Activated CD4-positive, alpha-beta T cell treated with anti-CD3 and anti-CD28 coated beads, Interleukin-2, amount 10 ng/mL, durations not matched to agents 24 days and 14 days (primary cell): ENCODE measurements at regions of chr21 and their contacts with region 1.

Region 1: GRCh38 chr21:29849735-29850176 is 90.0 kb downstream of the GRIK1 start:
- DNase-seq: peak; percentile 84
- H3K4me3 Mint-ChIP-seq: no peak overlapping the region
- H3K27ac Mint-ChIP-seq: no peak overlapping the region
- H3K4me1 Mint-ChIP-seq: no peaks in the 10 kb centered on the region
- H3K27me3 Mint-ChIP-seq: no peaks in the 10 kb centered on the region

Region 2: GRCh38 chr21:29477941-29478340 is 371.8 kb before region 1 on chr21:
- intact Hi-C with region 1: loop called (anchors 1 kb)
- DNase-seq: no peak
- H3K4me3 Mint-ChIP-seq: no peak overlapping the region
- H3K27ac Mint-ChIP-seq: no peak overlapping the region
- H3K4me1 Mint-ChIP-seq: peaks cover 7% of the 10 kb centered on the region
- H3K27me3 Mint-ChIP-seq: no peaks in the 10 kb centered on the region